Activated T-helper 2 cell treated with anti-CD3 and anti-CD28 coated beads, Interferon-gamma antibody, Interleukin-2, Interleukin-4, amounts not matched to agents 10 μg/mL and 5 μg/mL and 100 μg/mL, durations not matched to agents 14 hours and 24 hours and 36 hours (primary cell): ENCODE measurements at regions of chr4 and their contacts with region 1.

Region 1: GRCh38 chr4:121823505-121824170 is at the start of gene CCNA2:
- DNase-seq: peak; percentile 95
- H3K4me3 Mint-ChIP-seq: peak within 1 kb of the TSS; percentile 98
- H3K27ac Mint-ChIP-seq: peak within 1 kb of the TSS; percentile 94
- H3K4me1 Mint-ChIP-seq: peaks cover 35% of the 10 kb centered on the region
- H3K27me3 Mint-ChIP-seq: no peaks in the 10 kb centered on the region
- total RNA-seq, gene CCNA2: 74.7 and 75.1 TPM in 2 replicates

Region 2: DNA sequence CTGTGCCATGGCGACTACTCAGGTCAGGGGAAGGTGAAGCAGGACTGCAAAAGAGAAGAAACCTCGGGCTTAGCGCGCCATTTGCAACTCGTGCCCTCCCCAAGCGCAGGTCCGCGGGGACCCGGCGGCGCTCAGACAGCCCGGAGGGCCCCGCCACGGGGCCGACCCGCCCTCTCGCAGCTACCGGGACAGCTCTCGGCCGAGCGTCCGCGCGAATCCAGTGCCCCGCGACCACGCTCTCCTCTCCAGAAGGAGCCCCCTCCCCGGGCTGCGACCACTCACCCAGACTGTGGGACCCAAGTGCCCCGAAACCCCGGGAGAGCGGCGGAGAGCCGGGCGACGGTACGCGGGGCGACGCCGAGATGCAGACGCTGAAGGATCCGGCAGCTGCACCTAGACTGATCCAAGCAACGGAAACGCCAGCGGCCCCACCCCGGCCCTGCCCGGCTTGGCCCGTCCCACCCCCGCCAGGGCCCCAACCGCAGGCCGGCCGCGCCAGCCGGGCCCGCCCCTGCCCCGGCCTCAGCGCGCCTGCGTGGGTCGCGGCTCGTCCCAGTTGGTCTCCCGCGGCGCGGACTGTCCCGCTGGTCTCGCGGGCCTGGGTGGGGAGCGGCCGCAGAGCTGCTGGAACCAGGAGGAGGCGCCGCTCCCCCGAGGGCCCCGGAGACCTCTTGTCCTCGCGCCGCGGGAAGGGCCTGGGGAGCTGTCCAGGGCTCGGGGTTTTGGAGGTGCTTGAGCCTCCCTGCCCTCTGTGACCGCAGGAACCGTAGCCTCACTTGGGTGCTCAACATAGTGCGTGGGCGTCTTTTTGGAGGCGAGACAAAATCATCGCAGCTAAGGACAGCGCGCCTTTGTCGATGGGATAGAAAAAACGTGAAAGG is 126.8 kb before region 1 on chr4 and contains the start of gene ANXA5:
- intact Hi-C with region 1: loop called (anchors 2 kb)
- DNase-seq: peak; percentile 73
- H3K4me3 Mint-ChIP-seq: peak within 1 kb of the TSS; percentile 97
- H3K27ac Mint-ChIP-seq: peak within 1 kb of the TSS; percentile 97
- H3K4me1 Mint-ChIP-seq: peaks cover 35% of the 10 kb centered on the region
- H3K27me3 Mint-ChIP-seq: peaks cover 41% of the 10 kb centered on the region
- total RNA-seq, gene ANXA5: 105 and 107 TPM in 2 replicates

Region 3: GRCh38 chr4:121800961-121801714 is 22.5 kb before region 1 on chr4 and contains the start of gene EXOSC9:
- intact Hi-C with region 1: loop called (anchors 1 kb)
- DNase-seq: peak; percentile 92
- H3K4me3 Mint-ChIP-seq: peak within 1 kb of the TSS; percentile 85
- H3K27ac Mint-ChIP-seq: peak within 1 kb of the TSS; percentile 93
- H3K4me1 Mint-ChIP-seq: peaks cover 38% of the 10 kb centered on the region
- H3K27me3 Mint-ChIP-seq: no peaks in the 10 kb centered on the region
- total RNA-seq, gene EXOSC9: 62.1 and 65.9 TPM in 2 replicates

Region 4: GRCh38 chr4:121869841-121870656 is 46.4 kb after region 1 on chr4 and contains the start of gene BBS7:
- intact Hi-C with region 1: loop called (anchors 1 kb)
- DNase-seq: peak; percentile 92
- H3K4me3 Mint-ChIP-seq: peak within 1 kb of the TSS; percentile 96
- H3K27ac Mint-ChIP-seq: peak within 1 kb of the TSS; percentile 80
- H3K4me1 Mint-ChIP-seq: peaks cover 16% of the 10 kb centered on the region
- H3K27me3 Mint-ChIP-seq: peaks cover 17% of the 10 kb centered on the region
- total RNA-seq, gene BBS7: 17.5 and 18.5 TPM in 2 replicates

Region 5: GRCh38 chr4:121950212-121950679 is 126.6 kb after region 1 on chr4:
- intact Hi-C with region 1: loop called (anchors 5 kb)
- DNase-seq: peak; percentile 71
- H3K4me3 Mint-ChIP-seq: peak overlapping the region; percentile 82
- H3K27ac Mint-ChIP-seq: no peak overlapping the region
- H3K4me1 Mint-ChIP-seq: peaks cover 14% of the 10 kb centered on the region
- H3K27me3 Mint-ChIP-seq: peaks cover 63% of the 10 kb centered on the region

Region 6: GRCh38 chr4:122010610-122011009 is 187.0 kb after region 1 on chr4:
- intact Hi-C with region 1: no loop called
- DNase-seq: no peak
- H3K4me3 Mint-ChIP-seq: no peak overlapping the region
- H3K27ac Mint-ChIP-seq: no peak overlapping the region
- H3K4me1 Mint-ChIP-seq: peaks cover 4% of the 10 kb centered on the region
- H3K27me3 Mint-ChIP-seq: peaks cover 17% of the 10 kb centered on the region

Region 7: GRCh38 chr4:122107680-122108079 is 284.0 kb after region 1 on chr4:
- intact Hi-C with region 1: no loop called
- DNase-seq: no peak
- H3K4me3 Mint-ChIP-seq: no peak overlapping the region
- H3K27ac Mint-ChIP-seq: no peak overlapping the region
- H3K4me1 Mint-ChIP-seq: no peaks in the 10 kb centered on the region
- H3K27me3 Mint-ChIP-seq: peaks cover 18% of the 10 kb centered on the region

Region 8: DNA sequence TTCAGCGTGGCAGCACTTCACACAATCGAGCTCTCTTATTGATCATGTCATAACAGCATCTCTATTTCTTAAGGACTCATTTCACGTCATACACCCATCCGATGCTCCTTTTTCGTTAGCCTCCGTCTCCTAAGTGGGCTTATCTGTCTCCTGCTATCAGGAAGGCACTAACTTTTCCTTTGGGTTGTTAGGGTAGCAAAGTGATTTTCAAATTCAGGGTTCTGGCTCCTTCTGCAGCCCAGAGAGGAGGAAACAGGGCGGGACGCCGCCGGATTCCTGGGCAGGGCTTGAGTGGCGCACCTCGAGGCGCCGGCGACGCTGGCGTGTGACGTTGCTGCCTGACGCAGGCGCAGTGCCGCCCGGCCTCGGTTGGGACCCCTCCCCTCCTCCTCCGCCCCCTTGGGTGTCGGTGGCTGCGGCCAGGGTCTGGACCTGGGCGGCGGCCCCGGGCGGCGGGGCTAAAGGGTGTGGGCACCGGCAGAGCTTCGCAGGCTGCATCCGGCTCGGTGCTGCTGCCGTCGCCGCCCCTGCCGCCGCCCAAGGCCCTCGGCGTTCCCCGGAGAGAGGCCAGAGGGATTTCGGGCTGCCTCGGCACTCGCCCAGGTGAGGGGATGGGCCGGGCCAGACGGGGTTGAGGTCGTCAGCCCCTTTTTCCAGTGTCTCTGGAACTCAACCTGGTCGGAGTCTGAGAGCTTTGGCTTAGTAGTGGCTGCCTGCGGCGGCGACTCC is 328.5 kb after region 1 on chr4 and contains the start of gene BLTP1:
- intact Hi-C with region 1: loop called (anchors 5 kb)
- DNase-seq: peak; percentile 85
- H3K4me3 Mint-ChIP-seq: peak within 1 kb of the TSS; percentile 98
- H3K27ac Mint-ChIP-seq: peak within 1 kb of the TSS; percentile 92
- H3K4me1 Mint-ChIP-seq: peaks cover 50% of the 10 kb centered on the region
- H3K27me3 Mint-ChIP-seq: no peaks in the 10 kb centered on the region
- total RNA-seq, gene BLTP1: 28.1 and 32.6 TPM in 2 replicates

Region 9: DNA sequence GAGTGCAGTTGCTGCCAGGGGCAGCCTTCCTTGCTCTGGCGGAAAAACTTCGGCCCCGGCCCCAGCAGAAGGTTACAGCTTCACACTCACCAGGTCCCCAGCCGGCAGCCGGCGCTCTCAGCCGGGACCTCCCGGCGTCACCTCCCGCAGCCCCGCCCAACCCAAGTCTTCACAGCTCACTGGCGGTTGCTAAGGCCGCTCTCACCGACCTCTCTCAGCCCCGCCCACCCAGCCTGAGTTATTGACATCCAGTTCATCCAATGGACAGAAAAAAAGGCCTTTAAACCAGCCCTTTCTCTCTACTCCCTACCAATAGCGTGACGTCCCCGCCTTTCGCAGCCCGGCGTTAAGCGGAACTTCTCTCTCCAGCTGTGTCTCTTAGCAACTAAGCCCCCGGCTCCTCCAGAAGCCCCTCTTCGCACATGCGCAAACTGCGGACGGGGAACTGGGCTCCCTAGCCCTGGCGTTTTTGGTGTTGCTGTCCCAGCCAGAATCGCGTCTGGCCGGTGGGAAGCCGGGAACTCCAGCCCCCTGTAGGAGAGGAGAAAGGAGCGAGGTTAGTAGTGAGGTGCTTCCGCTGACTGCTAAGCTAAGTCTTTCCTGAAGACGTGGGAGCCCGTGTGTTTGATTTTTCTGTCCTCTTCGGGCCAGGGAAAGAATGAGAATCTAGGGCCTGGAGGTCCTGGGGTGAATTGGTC is 908.8 kb after region 1 on chr4 and contains the start of gene BBS12:
- intact Hi-C with region 1: loop called (anchors 10 kb)
- DNase-seq: peak; percentile 99
- H3K4me3 Mint-ChIP-seq: peak within 1 kb of the TSS; percentile 95
- H3K27ac Mint-ChIP-seq: peak within 1 kb of the TSS; percentile 92
- H3K4me1 Mint-ChIP-seq: peaks cover 14% of the 10 kb centered on the region
- H3K27me3 Mint-ChIP-seq: no peaks in the 10 kb centered on the region
- total RNA-seq, gene BBS12: 3.7 and 5.5 TPM in 2 replicates